ENCODE measurements at regions of chr15 and their contacts with region 1.

Region 1: GRCh38 chr15:68875377-68876116 is 54.8 kb upstream of the SPESP1 start:
- DNase-seq: peak; percentile 76
- H3K4me3 Mint-ChIP-seq: no peak overlapping the region
- H3K27ac Mint-ChIP-seq: no peak overlapping the region
- H3K4me1 Mint-ChIP-seq: peaks cover 4% of the 10 kb centered on the region
- H3K27me3 Mint-ChIP-seq: peaks cover 21% of the 10 kb centered on the region

Region 2: DNA sequence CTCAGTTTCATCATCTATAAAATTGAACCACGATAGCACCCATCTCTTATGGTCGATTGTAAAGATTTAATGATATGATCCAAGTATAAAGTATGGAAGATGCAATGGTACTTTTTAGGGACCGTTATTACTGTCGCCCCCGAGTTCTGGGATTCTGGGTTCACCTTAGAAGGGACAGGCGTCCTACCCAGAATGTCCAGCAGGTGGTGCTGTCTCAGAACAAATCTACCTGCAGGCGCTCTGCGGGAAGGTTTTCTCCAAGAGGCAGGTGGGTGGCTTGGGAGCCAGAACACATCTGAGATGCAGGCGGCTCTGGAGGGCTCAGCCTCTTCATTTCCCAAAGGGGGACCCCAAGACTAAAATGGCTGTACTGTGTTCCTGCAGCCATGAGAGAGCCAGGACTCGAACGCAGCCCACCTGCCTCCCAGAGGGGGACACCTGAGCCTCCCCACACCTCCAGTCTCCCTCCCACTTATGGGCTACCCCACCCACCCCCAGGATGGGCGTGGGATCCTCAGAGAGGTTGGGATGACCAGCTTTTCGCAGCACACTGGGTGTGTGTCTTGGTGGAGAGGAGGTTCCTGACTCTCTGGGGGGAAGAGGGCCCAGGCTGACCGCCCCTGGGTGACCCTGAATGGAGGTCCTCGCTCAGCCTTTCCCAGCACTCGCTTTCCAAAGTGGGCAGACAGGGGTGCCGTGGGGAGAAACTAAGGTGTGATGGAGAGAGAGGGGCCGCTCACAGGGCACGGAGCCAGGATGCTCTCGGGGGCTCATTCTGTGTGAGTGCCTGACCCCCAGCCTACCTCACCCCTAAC is 324.9 kb before region 1 on chr15:
- intact Hi-C with region 1: loop called (anchors 1 kb)
- DNase-seq: peak; percentile 57
- H3K4me3 Mint-ChIP-seq: no peak overlapping the region
- H3K27ac Mint-ChIP-seq: no peak overlapping the region
- H3K4me1 Mint-ChIP-seq: peaks cover 9% of the 10 kb centered on the region
- H3K27me3 Mint-ChIP-seq: peaks cover 31% of the 10 kb centered on the region

Region 3: GRCh38 chr15:68559345-68560310 is 315.9 kb before region 1 on chr15:
- intact Hi-C with region 1: loop called (anchors 2 kb)
- DNase-seq: peak; percentile 65
- H3K4me3 Mint-ChIP-seq: peak overlapping the region; percentile 73
- H3K27ac Mint-ChIP-seq: no peak overlapping the region
- H3K4me1 Mint-ChIP-seq: peaks cover 15% of the 10 kb centered on the region
- H3K27me3 Mint-ChIP-seq: peaks cover 51% of the 10 kb centered on the region

Region 4: DNA sequence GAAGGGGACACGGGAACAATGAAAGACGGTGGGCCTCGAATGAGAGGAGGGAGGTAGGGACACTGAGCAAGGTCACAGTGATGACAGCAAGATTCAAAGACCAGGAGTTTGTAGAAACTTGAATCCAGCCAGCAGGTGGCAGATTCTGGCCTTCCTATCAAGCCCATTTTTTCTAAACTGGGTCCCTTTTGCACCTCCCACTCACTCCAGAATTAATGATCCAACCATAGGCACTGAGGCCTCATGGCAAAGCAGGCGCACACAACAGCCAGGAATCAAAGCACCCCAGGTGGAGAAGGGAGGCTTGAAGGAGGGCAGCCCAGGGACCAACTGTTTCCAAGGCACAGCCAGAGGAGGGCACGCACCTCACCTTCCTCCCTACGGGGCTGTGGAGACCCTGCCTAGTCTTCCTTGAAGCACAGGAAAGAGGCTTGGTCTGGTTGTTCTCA is 145.1 kb before region 1 on chr15:
- intact Hi-C with region 1: loop called (anchors 1 kb)
- DNase-seq: no peak
- H3K4me3 Mint-ChIP-seq: no peak overlapping the region
- H3K27ac Mint-ChIP-seq: no peak overlapping the region
- H3K4me1 Mint-ChIP-seq: peaks cover 3% of the 10 kb centered on the region
- H3K27me3 Mint-ChIP-seq: peaks cover 22% of the 10 kb centered on the region

Region 5: DNA sequence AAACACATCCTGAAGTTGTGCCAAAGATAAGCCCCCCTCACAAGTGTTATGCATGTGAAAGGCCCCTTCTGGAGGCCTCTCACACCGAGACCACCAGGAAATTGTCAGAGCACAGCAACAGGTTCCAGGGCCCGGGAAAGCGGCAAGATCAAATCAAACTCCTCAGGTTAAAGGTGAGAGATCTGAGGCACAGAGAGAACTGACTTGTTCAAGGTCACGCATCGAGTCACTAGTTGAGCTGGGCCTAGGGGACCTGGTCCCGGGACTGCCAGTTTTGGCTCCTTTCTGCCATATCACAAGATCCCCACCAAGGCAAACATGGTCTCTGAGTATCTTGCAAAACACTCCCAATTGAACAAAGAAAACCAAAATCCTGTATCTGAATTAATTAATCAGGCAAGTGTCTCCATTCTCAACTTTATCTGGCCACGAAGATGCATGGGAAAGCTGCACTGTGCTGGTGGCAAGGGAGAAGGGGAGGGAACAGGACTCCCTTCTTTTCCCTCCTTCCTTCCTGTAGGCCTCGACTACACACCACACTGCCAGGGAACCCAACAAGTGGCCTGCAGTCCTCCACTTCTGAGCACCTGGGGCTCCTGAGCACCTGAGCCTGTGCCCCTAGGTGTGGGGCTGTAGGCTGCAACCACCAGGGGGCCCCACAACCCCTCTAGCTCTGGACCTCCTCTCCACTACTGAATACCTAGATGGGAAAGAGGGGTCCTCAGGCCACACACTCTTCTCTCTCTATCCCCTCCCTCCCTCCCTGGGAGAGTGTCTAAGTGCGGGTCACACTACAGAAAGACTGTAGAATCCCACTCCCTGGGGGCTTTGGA is 92.1 kb before region 1 on chr15:
- intact Hi-C with region 1: loop called (anchors 5 kb)
- DNase-seq: peak; percentile 30
- H3K4me3 Mint-ChIP-seq: no peak overlapping the region
- H3K27ac Mint-ChIP-seq: peak overlapping the region; percentile 49
- H3K4me1 Mint-ChIP-seq: peaks cover 40% of the 10 kb centered on the region
- H3K27me3 Mint-ChIP-seq: no peaks in the 10 kb centered on the region

Region 6: GRCh38 chr15:68888419-68888818 is 12.9 kb after region 1 on chr15:
- intact Hi-C with region 1: no loop called
- DNase-seq: no peak
- H3K4me3 Mint-ChIP-seq: peak overlapping the region; percentile 61
- H3K27ac Mint-ChIP-seq: no peak overlapping the region
- H3K4me1 Mint-ChIP-seq: peaks cover 2% of the 10 kb centered on the region
- H3K27me3 Mint-ChIP-seq: peaks cover 15% of the 10 kb centered on the region

Measured in activated T-helper 2 cell treated with anti-CD3 and anti-CD28 coated beads, Interferon-gamma antibody, Interleukin-2, Interleukin-4, amounts not matched to agents 10 μg/mL and 5 μg/mL and 100 μg/mL, durations not matched to agents 14 hours and 24 hours and 36 hours (primary cell).